ENCODE measurements at regions of chr15 and their contacts with region 1.

Region 1: GRCh38 chr15:76336254-76337058 is at the start of gene ISL2:
- DNase-seq: peak; percentile 79
- H3K4me3 Mint-ChIP-seq: peak within 1 kb of the TSS; percentile 92
- H3K27ac Mint-ChIP-seq: peak within 1 kb of the TSS; percentile 85
- H3K4me1 Mint-ChIP-seq: peaks cover 58% of the 10 kb centered on the region
- H3K27me3 Mint-ChIP-seq: peaks cover 51% of the 10 kb centered on the region
- total RNA-seq, gene ISL2: 1.3 TPM in 2 replicates

Region 2: DNA sequence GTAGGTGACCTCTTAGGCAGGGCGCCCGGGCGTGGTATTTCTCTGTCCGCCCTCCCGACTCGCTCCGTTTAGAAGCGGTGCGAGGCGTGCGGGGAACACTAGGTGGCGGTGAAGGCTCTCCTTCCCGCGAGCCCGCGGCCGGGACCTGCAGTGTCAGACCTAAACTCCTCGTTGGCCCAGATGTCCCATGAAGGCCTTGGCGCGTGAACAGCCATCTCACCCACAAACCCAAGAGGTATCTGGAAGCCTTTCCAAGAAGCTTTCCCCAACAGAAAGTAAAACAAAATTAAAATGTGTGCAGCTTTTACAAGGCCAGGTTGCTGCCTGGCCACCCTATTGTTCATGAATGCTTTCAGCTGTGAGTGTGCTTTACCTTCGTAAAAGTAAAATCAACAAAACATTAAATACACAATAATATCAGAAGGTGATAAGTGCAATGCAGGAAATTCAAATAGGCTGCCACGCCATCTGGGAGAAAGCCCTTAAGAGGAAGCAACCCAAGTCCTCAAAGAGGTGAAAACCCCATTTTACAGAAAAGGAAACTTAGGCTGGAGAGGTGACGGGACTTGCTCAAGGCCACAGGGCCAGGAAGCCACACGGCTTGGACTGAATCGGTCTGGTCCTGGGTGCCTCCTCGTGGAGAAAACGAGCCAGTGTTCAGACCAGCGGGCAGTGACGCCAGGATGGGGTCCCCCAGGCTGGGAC is 145.5 kb before region 1 on chr15:
- intact Hi-C with region 1: loop called (anchors 2 kb)
- DNase-seq: peak; percentile 55
- H3K4me3 Mint-ChIP-seq: peak overlapping the region; percentile 15
- H3K27ac Mint-ChIP-seq: no peak overlapping the region
- H3K4me1 Mint-ChIP-seq: peaks cover 14% of the 10 kb centered on the region
- H3K27me3 Mint-ChIP-seq: peaks cover 19% of the 10 kb centered on the region

Region 3: DNA sequence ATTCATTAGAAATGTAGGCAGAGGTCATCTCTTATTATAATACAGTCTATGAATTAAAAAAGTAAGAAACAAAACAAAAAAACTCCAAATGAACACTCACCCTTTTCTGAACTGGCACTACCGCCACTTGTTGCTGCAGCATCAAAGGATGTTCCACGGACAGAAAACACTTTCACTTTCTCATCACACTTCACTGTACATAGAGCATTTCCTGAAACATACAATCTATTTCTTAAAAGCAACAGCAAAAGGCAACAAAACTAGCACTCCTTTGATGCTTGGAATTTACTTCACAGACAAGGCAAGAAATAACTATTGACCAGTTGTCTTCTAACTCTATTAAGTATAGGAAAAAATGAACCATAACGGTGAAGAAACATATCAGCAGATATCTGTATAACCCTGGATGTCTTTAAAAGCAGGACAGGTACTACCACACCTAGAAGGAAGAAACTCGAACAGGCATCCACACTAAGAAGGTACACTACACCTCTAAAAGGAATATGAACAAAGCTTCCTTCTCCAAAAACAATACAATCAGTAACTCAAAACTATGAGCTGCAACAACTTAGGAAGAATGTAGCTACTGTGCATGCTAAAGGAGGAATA is 50.1 kb before region 1 on chr15:
- intact Hi-C with region 1: loop called (anchors 2 kb)
- DNase-seq: no peak
- H3K4me3 Mint-ChIP-seq: peak overlapping the region; percentile 66
- H3K27ac Mint-ChIP-seq: peak overlapping the region; percentile 52
- H3K4me1 Mint-ChIP-seq: peaks cover 22% of the 10 kb centered on the region
- H3K27me3 Mint-ChIP-seq: no peaks in the 10 kb centered on the region

Region 4: GRCh38 chr15:76347482-76348055 is 11.1 kb after region 1 on chr15:
- intact Hi-C with region 1: no loop called
- DNase-seq: no peak
- H3K4me3 Mint-ChIP-seq: no peak overlapping the region
- H3K27ac Mint-ChIP-seq: no peak overlapping the region
- H3K4me1 Mint-ChIP-seq: peaks cover 7% of the 10 kb centered on the region
- H3K27me3 Mint-ChIP-seq: peaks cover 63% of the 10 kb centered on the region

Region 5: DNA sequence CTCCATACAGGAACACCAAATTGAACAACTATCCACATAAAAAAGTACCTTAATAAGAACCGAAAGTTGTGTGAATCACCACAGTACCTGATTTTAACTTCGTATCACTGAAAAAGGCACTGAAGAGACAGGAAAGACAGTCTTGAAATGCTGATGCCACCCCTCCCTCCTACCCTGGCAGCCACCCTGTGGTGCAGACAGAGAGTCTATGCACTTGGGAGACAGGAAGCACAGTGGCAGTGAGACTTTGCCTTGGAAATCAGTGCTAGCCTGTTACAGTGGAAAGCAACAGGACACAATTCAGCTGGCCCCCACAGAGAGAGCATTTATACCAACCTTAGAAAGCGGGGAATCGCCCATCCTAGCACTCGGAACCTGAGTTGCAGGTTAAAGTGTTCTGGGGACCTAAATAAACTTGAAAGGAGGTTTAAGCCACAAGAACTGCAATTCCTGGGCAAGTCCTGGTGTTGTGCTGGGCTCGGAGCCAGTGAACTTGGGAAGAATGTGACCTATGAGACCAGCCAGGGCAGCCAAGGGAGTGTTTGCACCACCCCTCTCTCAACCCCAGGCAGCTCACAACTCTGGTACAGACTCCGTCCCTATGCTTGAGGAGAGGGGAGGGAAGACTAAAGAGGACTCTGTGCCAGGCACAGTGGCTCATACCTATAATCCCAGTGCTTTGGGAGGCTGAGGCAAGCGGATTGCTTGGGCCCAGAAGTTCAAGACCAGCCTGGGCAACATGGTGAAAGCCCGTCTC is 240.2 kb after region 1 on chr15:
- intact Hi-C with region 1: loop called (anchors 10 kb)
- DNase-seq: no peak
- H3K4me3 Mint-ChIP-seq: no peak overlapping the region
- H3K27ac Mint-ChIP-seq: no peak overlapping the region
- H3K4me1 Mint-ChIP-seq: peaks cover 22% of the 10 kb centered on the region
- H3K27me3 Mint-ChIP-seq: no peaks in the 10 kb centered on the region

Region 6: GRCh38 chr15:76866716-76867321 is 530.4 kb after region 1 on chr15:
- intact Hi-C with region 1: loop called (anchors 5 kb)
- DNase-seq: no peak
- H3K4me3 Mint-ChIP-seq: no peak overlapping the region
- H3K27ac Mint-ChIP-seq: no peak overlapping the region
- H3K4me1 Mint-ChIP-seq: peaks cover 17% of the 10 kb centered on the region
- H3K27me3 Mint-ChIP-seq: peaks cover 4% of the 10 kb centered on the region

Measured in activated T-helper 1 cell treated with anti-CD3 and anti-CD28 coated beads, Interleukin-12 subunit alpha, Interleukin-12 subunit beta, Interleukin-2, Interleukin-4 antibody, amounts not matched to agents 30 ng/mL and 10 ng/mL and 1 ng/mL, durations not matched to agents 14 hours and 24 hours and 36 hours (primary cell).